ENCODE measurements at regions of chr6 and their contacts with region 1.

Region 1: GRCh38 chr6:41936073-41936837 is 5.4 kb downstream of the CCND3 start:
- DNase-seq: peak; percentile 80
- ATAC-seq: peak; percentile 82
- H3K4me3 ChIP-seq: no peak overlapping the region
- H3K27ac ChIP-seq: peak overlapping the region; percentile 3; the same call in 1 of the 2 replicates
- H3K4me1 ChIP-seq: peaks cover 39% of the 10 kb centered on the region
- H3K27me3 ChIP-seq: no peaks in the 10 kb centered on the region
- CTCF ChIP-seq: peak; percentile 94

Region 2: DNA sequence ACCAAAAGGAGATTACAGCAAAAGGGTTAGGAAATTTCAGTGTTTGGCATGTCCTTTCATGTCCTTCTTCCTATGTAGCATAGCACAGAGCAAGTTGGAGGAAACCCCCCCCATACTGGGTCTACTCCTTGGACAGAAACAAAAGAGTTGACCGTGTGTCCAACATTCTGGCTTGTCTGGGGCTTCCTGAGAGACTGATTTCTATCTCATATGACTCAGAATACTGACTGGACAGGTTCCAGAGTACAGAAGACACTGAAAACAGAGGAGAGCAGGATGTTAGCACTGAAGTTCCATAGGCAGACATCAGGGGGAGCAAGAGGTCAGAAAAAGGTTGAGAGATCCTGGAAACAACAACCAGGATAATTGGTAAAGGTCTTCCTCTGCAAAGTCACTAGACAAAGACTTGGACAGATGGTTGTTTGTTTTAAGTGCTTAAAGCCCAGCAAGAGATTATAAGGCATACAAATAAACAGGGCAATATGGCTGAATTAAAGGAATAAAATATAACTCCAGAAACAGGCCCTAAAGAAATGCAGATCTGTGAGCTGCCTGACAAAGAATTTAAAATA is 89.5 kb before region 1 on chr6:
- CTCF ChIA-PET with region 1: interaction called, 7 read pairs
- POLR2A ChIA-PET with region 1: no interaction called
- in situ Hi-C with region 1: no loop called
- intact Hi-C with region 1: loop called (anchors 1 kb)
- DNase-seq: peak; percentile 84
- ATAC-seq: peak; percentile 93
- H3K4me3 ChIP-seq: no peak overlapping the region
- H3K27ac ChIP-seq: no peak overlapping the region
- H3K4me1 ChIP-seq: no peaks in the 10 kb centered on the region
- H3K27me3 ChIP-seq: no peaks in the 10 kb centered on the region
- CTCF ChIP-seq: peak; percentile 86

Region 3: GRCh38 chr6:41954668-41955067 is 18.4 kb after region 1 on chr6:
- CTCF ChIA-PET with region 1: no interaction called
- POLR2A ChIA-PET with region 1: interaction called, 15 read pairs
- in situ Hi-C with region 1: no loop called
- intact Hi-C with region 1: no loop called
- DNase-seq: no peak
- ATAC-seq: no peak
- H3K4me3 ChIP-seq: no peak overlapping the region
- H3K27ac ChIP-seq: no peak overlapping the region
- H3K4me1 ChIP-seq: no peaks in the 10 kb centered on the region
- H3K27me3 ChIP-seq: no peaks in the 10 kb centered on the region
- CTCF ChIP-seq: no peak

Measured in Panc1 (cell line).